PC-3 (cell line): ENCODE measurements at regions of chr10 and their contacts with region 1.

Region 1: GRCh38 chr10:29635711-29636144 is 957 bp upstream of the SVIL start:
- DNase-seq: no peak
- ATAC-seq: peak; percentile 25
- H3K4me3 ChIP-seq: peak overlapping the region; percentile 32; the same call in 1 of the 2 replicates
- H3K27ac ChIP-seq: peak overlapping the region; percentile 99
- H3K4me1 ChIP-seq: peaks cover 54% of the 10 kb centered on the region
- H3K27me3 ChIP-seq: no peaks in the 10 kb centered on the region
- CTCF ChIP-seq: no peak

Region 2: GRCh38 chr10:29535012-29535777 is 100.5 kb before region 1 on chr10:
- CTCF ChIA-PET with region 1: no interaction called
- POLR2A ChIA-PET with region 1: no interaction called
- intact Hi-C with region 1: loop called (anchors 10 kb)
- DNase-seq: peak; percentile 90
- ATAC-seq: peak; percentile 89
- H3K4me3 ChIP-seq: peak overlapping the region; percentile 43; the same call in 1 of the 2 replicates
- H3K27ac ChIP-seq: peak overlapping the region; percentile 96
- H3K4me1 ChIP-seq: peaks cover 43% of the 10 kb centered on the region
- H3K27me3 ChIP-seq: no peaks in the 10 kb centered on the region
- CTCF ChIP-seq: peak; percentile 90

Region 3: DNA sequence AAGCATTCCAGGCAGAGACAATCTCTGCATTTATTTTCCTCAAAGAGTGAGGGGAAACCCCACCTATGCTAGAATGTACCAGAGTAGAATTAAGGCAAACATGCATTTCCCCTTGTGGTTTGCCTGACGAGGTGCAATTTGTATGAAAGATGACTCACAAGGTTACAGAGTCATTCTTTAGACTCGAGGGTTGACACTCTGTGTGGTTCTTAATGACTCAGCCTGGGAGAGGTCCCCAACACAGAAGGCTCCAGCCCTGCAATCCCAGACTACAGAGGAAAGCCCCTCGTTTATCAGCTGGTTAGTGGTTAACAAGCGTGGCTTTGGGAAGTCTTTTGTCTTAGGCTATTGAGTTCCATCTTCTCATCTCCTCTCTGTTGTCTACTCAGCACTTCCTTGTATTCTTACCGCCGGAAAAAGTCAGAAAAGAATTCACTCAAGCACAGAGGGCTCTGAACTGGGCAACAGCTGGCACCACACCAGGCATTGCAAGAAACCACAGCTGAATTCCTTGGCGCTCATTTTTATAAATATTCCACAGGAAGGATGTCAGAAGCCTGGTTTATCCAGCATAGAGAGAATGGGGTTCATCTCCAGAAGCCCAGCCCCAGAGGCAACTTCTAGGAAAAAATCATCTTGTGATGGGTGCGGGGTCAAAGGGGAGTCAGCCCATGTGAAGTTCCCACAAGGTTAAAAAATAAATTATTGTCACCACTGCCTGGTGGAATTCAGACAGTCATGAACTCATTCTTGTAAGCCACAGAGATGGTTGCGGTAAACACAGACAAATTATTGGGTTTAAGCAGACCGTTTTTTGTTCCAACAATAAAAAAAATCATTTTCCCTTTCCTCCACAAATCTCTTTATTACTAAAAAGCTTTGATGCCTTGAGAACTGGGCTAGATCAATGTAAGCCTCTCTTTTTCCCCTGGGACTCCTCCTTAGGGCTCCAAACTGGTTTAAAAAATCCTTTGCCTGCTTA is 23.5 kb after region 1 on chr10:
- CTCF ChIA-PET with region 1: no interaction called
- POLR2A ChIA-PET with region 1: no interaction called
- intact Hi-C with region 1: loop called (anchors 1 kb)
- DNase-seq: peak; percentile 95
- ATAC-seq: peak; percentile 94
- H3K4me3 ChIP-seq: peak overlapping the region; percentile 30
- H3K27ac ChIP-seq: peak overlapping the region; percentile 94
- H3K4me1 ChIP-seq: peaks cover 42% of the 10 kb centered on the region
- H3K27me3 ChIP-seq: no peaks in the 10 kb centered on the region
- CTCF ChIP-seq: no peak

Region 4: DNA sequence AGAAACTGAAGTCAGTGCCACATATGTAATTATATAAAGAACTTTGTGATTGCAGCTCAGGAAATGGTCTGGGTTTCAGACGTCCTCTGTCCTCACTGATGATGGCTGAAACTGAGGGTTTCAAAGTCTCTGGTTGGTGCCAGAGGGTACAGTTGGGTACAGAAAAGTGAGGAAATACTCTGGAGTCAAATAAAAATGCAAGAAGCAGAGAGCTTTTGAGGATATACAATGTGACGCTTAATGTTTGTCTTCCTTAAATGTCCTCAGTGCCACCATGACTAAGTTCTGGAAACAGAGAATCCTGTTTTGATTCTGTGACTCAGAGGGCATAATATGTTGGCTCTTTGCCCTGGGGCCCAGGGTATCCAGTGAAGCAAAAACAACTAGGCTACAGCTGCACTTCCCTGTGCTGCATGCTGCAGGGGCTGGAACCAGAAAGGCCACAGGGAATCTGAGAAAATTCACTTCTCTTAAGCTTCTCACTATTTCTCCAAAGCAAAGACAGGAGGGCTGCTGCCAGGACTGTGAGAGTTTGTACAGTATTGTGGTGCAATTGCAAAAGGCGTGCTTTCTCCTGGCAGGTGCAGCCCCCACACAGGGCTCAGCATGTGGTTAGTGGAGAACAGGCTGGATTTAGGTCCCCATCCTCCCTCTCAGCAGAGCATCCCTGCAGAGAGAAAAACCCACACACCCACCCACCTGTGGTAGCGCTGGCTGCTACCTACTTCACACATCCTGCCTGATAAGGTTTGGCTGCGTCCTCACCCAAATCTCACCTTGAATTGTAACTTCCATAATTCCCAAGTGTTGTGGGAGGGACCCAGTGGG is 168.5 kb after region 1 on chr10:
- CTCF ChIA-PET with region 1: interaction called, 10 read pairs
- POLR2A ChIA-PET with region 1: no interaction called
- intact Hi-C with region 1: no loop called
- DNase-seq: peak; percentile 97
- ATAC-seq: peak; percentile 79
- H3K4me3 ChIP-seq: peak overlapping the region; percentile 49; the same call in 1 of the 2 replicates
- H3K27ac ChIP-seq: peak overlapping the region; percentile 100
- H3K4me1 ChIP-seq: peaks cover 50% of the 10 kb centered on the region
- H3K27me3 ChIP-seq: no peaks in the 10 kb centered on the region
- CTCF ChIP-seq: no peak